ENCODE measurements at regions of chr4 and their contacts with region 1.

Region 1: DNA sequence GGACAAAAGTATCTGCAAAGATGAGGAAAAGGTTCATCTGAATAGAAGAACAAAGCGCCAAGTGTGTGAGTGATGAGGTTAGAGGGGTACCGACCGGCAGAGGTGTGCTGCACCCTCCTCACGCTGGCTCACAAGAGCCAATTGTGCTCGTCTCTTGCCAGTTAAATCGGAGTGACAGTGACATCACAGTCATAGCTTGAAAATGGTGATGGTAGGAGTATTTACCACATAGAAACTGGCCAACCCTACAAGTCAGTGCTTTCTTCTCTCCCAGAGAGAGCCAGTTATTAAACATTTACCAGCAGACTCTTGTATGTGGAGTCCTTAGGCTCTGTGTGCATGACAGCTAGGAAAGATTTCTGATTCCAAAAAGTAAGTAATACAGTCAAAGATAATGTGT is 32.4 kb downstream of the CLDN22 start:
- DNase-seq: no peak
- ATAC-seq: no peak
- H3K4me3 ChIP-seq: no peak overlapping the region
- H3K27ac ChIP-seq: no peak overlapping the region
- H3K4me1 ChIP-seq: no peaks in the 10 kb centered on the region
- H3K27me3 ChIP-seq: no peaks in the 10 kb centered on the region
- CTCF ChIP-seq: no peak
- EP300 ChIP-seq: no peak
- POLR2A ChIP-seq: no peak
- RAD21 ChIP-seq: no peak

Region 2: DNA sequence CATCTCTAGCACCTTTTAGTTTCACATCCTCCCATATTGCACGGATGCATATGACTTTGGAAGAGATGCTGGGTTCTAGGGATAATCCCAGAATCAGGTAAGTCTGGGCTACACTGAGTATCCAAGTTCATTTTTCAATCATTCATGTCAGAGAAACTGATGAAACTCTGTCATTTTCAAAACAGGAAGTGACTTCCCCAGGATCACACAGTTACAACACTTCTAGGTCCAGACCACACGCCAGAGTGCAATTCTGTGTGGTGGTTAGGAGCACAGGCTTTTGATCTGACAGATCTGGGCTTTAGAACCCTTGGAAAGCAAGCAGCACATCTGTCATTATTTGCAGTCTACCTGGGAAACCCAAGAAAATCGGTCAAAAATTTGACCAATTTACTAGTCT is 104.7 kb after region 1 on chr4:
- CTCF ChIA-PET with region 1: no interaction called
- POLR2A ChIA-PET with region 1: no interaction called
- in situ Hi-C with region 1: no loop called
- intact Hi-C with region 1: loop called (anchors 5 kb)
- DNase-seq: peak; percentile 24
- ATAC-seq: peak; percentile 39; the same call in 2 of the 3 replicates
- H3K4me3 ChIP-seq: no peak overlapping the region
- H3K27ac ChIP-seq: no peak overlapping the region
- H3K4me1 ChIP-seq: peaks cover 31% of the 10 kb centered on the region
- H3K27me3 ChIP-seq: peaks cover 2 to 10% of the 10 kb centered on the region in 2 experiments; a peak in 3 of 5 replicates
- CTCF ChIP-seq: no peak
- EP300 ChIP-seq: no peak
- POLR2A ChIP-seq: no peak
- RAD21 ChIP-seq: no peak

Region 3: GRCh38 chr4:183407128-183407585 is 119.5 kb after region 1 on chr4:
- CTCF ChIA-PET with region 1: no interaction called
- POLR2A ChIA-PET with region 1: no interaction called
- in situ Hi-C with region 1: no loop called
- intact Hi-C with region 1: loop called (anchors 5 kb)
- DNase-seq: peak; percentile 60
- ATAC-seq: peak; percentile 87
- H3K4me3 ChIP-seq: peak overlapping the region; percentile 34 to 63 (median 57); a peak in 5 of 6 replicates
- H3K27ac ChIP-seq: no peak overlapping the region
- H3K4me1 ChIP-seq: peaks cover 42% of the 10 kb centered on the region
- H3K27me3 ChIP-seq: peaks cover 1 to 10% of the 10 kb centered on the region in 2 experiments; a peak in 2 of 5 replicates
- CTCF ChIP-seq: peak; percentile 96
- EP300 ChIP-seq: no peak
- POLR2A ChIP-seq: no peak
- RAD21 ChIP-seq: peak; percentile 90

Measured in HepG2 (cell line).